ENCODE measurements at regions of chr15 and their contacts with region 1.

Region 1: GRCh38 chr15:60397772-60398445 is at the start of gene ANXA2:
- DNase-seq: peak; percentile 89 to 90
- H3K4me3 ChIP-seq: peak within 1 kb of the TSS; percentile 99
- H3K4me3 Mint-ChIP-seq: peak within 1 kb of the TSS; percentile 78
- H3K27ac Mint-ChIP-seq: peak within 1 kb of the TSS; percentile 98
- H3K4me1 ChIP-seq: peaks cover 59% of the 10 kb centered on the region
- H3K4me1 Mint-ChIP-seq: peaks cover 62% of the 10 kb centered on the region
- H3K27me3 ChIP-seq: no peaks in the 10 kb centered on the region
- H3K27me3 Mint-ChIP-seq: no peaks in the 10 kb centered on the region
- CTCF ChIP-seq: no peak
- total RNA-seq, gene ANXA2: 1,141 and 1,158 TPM in 2 replicates

Region 2: GRCh38 chr15:60362321-60363086 is 35.4 kb before region 1 on chr15:
- CTCF ChIA-PET with region 1: interaction called, 3 read pairs
- POLR2A ChIA-PET with region 1: no interaction called
- intact Hi-C with region 1: loop called (anchors 5 kb)
- DNase-seq: no peak
- H3K4me3 ChIP-seq: no peak overlapping the region
- H3K4me3 Mint-ChIP-seq: peak overlapping the region; percentile 6
- H3K27ac Mint-ChIP-seq: peak overlapping the region; percentile 38
- H3K4me1 ChIP-seq: peaks cover 46% of the 10 kb centered on the region
- H3K4me1 Mint-ChIP-seq: peaks cover 16% of the 10 kb centered on the region
- H3K27me3 ChIP-seq: no peaks in the 10 kb centered on the region
- H3K27me3 Mint-ChIP-seq: no peaks in the 10 kb centered on the region
- CTCF ChIP-seq: no peak

Region 3: GRCh38 chr15:60379525-60380274 is 18.2 kb before region 1 on chr15:
- CTCF ChIA-PET with region 1: no interaction called
- POLR2A ChIA-PET with region 1: interaction called, 9 read pairs
- intact Hi-C with region 1: loop called (anchors 1 kb)
- DNase-seq: peak; percentile 84 to 86
- H3K4me3 ChIP-seq: no peak overlapping the region
- H3K4me3 Mint-ChIP-seq: peak overlapping the region; percentile 50
- H3K27ac Mint-ChIP-seq: peak overlapping the region; percentile 89
- H3K4me1 ChIP-seq: peaks cover 83% of the 10 kb centered on the region
- H3K4me1 Mint-ChIP-seq: peaks cover 60% of the 10 kb centered on the region
- H3K27me3 ChIP-seq: no peaks in the 10 kb centered on the region
- H3K27me3 Mint-ChIP-seq: no peaks in the 10 kb centered on the region
- CTCF ChIP-seq: no peak

Region 4: DNA sequence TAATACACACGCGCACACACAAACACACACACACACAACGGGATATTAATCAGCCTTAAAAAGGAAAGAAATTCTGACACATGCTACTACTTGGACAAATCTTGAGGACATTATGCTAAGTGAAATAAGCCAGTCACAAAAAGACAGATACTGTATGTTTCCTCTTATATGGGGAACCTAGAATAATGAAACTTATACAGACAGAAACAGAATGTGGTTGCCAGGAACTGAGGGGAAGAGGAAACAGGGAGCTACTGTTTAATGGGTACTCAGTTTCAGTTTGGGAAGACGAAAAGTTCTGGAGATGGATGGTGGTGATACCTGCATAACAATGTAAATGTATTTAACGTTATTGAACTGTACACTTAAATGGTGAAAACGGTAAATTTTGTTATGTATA is 60.8 kb after region 1 on chr15:
- CTCF ChIA-PET with region 1: no interaction called
- POLR2A ChIA-PET with region 1: interaction called, 8 read pairs
- intact Hi-C with region 1: loop called (anchors 5 kb)
- DNase-seq: no peak
- H3K4me3 ChIP-seq: no peak overlapping the region
- H3K4me3 Mint-ChIP-seq: no peak overlapping the region
- H3K27ac Mint-ChIP-seq: no peak overlapping the region
- H3K4me1 ChIP-seq: peaks cover 23% of the 10 kb centered on the region
- H3K4me1 Mint-ChIP-seq: peaks cover 6% of the 10 kb centered on the region
- H3K27me3 ChIP-seq: no peaks in the 10 kb centered on the region
- H3K27me3 Mint-ChIP-seq: no peaks in the 10 kb centered on the region
- CTCF ChIP-seq: no peak

Measured in Caco-2 (cell line).